Posterior cingulate gyrus (tissue), 11 donors: ENCODE measurements at regions of chr1 and their contacts with region 1.

Region 1: GRCh38 chr1:244796718-244797406 is 38.6 kb upstream of the COX20 start:
- DNase-seq: peak in 6 of 10 donors; percentile 18 to 81 (median 70)

Region 2: GRCh38 chr1:244599937-244600350 is 196.9 kb before region 1 on chr1:
- intact Hi-C with region 1: loop called (anchors 1 kb)
- DNase-seq: no peak

Region 3: GRCh38 chr1:245067257-245067656 is 270.4 kb after region 1 on chr1:
- intact Hi-C with region 1: no loop called
- DNase-seq: no peak